CD8-positive, alpha-beta memory T cell (primary cell): ENCODE measurements at regions of chrX and their contacts with region 1.

Region 1: DNA sequence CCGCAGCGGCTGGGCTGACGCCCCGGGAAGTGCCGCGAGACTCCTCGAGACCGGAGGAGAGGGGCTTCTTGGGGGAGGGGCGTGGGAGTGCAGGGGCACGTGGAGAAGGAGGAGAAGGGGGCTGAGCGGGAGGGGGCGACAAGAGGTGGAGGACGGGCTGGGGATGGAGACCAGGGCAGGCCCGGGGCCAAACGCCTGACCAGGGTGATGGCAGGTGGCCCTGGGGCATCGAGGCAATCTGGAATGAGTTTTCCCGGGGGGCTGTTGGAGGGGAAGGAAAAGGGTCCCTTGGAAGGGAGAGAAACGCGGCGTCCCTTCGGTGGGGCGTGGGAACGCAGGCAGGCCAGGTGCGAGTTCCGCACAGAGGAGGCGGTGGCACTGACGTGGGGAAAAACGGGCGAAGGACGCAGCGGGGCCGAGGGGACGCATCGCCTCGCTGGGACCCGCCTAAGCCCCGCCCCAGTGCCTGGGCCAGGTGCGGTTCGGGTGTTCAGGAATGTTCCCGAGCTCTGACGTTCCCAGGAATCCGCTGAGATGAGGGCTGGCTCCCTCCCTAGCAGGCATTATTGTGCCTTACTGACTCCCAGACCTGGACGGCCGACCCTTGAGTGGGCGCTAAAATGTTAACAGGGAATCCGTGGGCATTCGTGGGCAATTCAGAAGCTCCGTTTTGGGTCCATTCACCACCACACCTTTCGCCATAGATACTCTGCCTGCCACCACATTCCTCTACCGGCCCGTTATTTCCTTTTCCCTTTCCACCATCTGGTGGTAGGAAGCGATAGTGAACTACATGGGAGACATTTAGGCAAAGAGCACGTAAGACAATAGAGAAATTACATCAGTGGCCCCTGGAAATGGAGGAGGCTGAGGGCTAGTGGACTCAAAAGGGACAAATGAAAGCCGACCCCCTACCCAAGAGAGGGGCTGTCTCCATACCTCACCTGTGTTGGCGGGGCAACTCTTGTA is 795 bp upstream of the SH3KBP1 start:
- DNase-seq: peak; percentile 22 to 60 (median 54)
- H3K4me3 ChIP-seq: peak overlapping the region; percentile 45
- H3K4me3 Mint-ChIP-seq: peak overlapping the region; percentile 80 to 91 (median 84)
- H3K27ac ChIP-seq: peak overlapping the region; percentile 9
- H3K27ac Mint-ChIP-seq: peak overlapping the region; percentile 65 to 96 (median 86)
- H3K4me1 ChIP-seq: peaks cover 25% of the 10 kb centered on the region
- H3K4me1 Mint-ChIP-seq: peaks cover 30 to 47% (median 37%) of the 10 kb centered on the region in 3 donors
- H3K27me3 ChIP-seq: no peaks in the 10 kb centered on the region
- H3K27me3 Mint-ChIP-seq: peaks cover 0 to 5% of the 10 kb centered on the region in 2 donors

Region 2: GRCh38 chrX:19785647-19786046 is 102.5 kb before region 1 on chrX:
- CTCF ChIA-PET with region 1: no interaction called
- POLR2A ChIA-PET with region 1: no interaction called
- DNase-seq: no peak
- H3K4me3 ChIP-seq: no peak overlapping the region
- H3K4me3 Mint-ChIP-seq: peak overlapping the region in 6 of 7 donors; percentile 7 to 64 (median 37)
- H3K27ac ChIP-seq: no peak overlapping the region
- H3K27ac Mint-ChIP-seq: peak overlapping the region; percentile 1 to 85 (median 52)
- H3K4me1 ChIP-seq: peaks cover 45% of the 10 kb centered on the region
- H3K4me1 Mint-ChIP-seq: peaks cover 61 to 86% (median 75%) of the 10 kb centered on the region in 3 donors
- H3K27me3 ChIP-seq: no peaks in the 10 kb centered on the region
- H3K27me3 Mint-ChIP-seq: peaks cover 0 to 2% of the 10 kb centered on the region in 2 donors

Region 3: GRCh38 chrX:19799319-19800182 is 88.6 kb before region 1 on chrX:
- CTCF ChIA-PET with region 1: interaction called, 10 read pairs
- POLR2A ChIA-PET with region 1: no interaction called
- DNase-seq: peak; percentile 12 to 71 (median 63)
- H3K4me3 ChIP-seq: peak overlapping the region; percentile 89
- H3K4me3 Mint-ChIP-seq: peak overlapping the region; percentile 90 to 96 (median 92)
- H3K27ac ChIP-seq: peak overlapping the region; percentile 67
- H3K27ac Mint-ChIP-seq: peak overlapping the region; percentile 88 to 98 (median 94)
- H3K4me1 ChIP-seq: peaks cover 70% of the 10 kb centered on the region
- H3K4me1 Mint-ChIP-seq: peaks cover 56 to 66% (median 64%) of the 10 kb centered on the region in 3 donors
- H3K27me3 ChIP-seq: no peaks in the 10 kb centered on the region
- H3K27me3 Mint-ChIP-seq: no peaks in the 10 kb centered on the region

Region 4: GRCh38 chrX:19814778-19815177 is 73.4 kb before region 1 on chrX:
- CTCF ChIA-PET with region 1: no interaction called
- POLR2A ChIA-PET with region 1: no interaction called
- DNase-seq: no peak
- H3K4me3 ChIP-seq: no peak overlapping the region
- H3K4me3 Mint-ChIP-seq: no peak overlapping the region
- H3K27ac ChIP-seq: no peak overlapping the region
- H3K27ac Mint-ChIP-seq: peak overlapping the region in 4 of 8 donors; percentile 55 to 85 (median 70)
- H3K4me1 ChIP-seq: peaks cover 28% of the 10 kb centered on the region
- H3K4me1 Mint-ChIP-seq: peaks cover 49 to 71% (median 67%) of the 10 kb centered on the region in 3 donors
- H3K27me3 ChIP-seq: no peaks in the 10 kb centered on the region
- H3K27me3 Mint-ChIP-seq: no peaks in the 10 kb centered on the region